Activated CD4-positive, alpha-beta T cell treated with anti-CD3 and anti-CD28 coated beads, Interleukin-2, amount 10 ng/mL, durations not matched to agents 24 days and 14 days (primary cell): ENCODE measurements at regions of chr2 and their contacts with region 1.

Region 1: GRCh38 chr2:69643602-69644505 is at the start of gene AAK1:
- DNase-seq: peak; percentile 95
- H3K4me3 Mint-ChIP-seq: peak within 1 kb of the TSS; percentile 86
- H3K27ac Mint-ChIP-seq: peak within 1 kb of the TSS; percentile 99
- H3K4me1 Mint-ChIP-seq: peaks cover 64% of the 10 kb centered on the region
- H3K27me3 Mint-ChIP-seq: no peaks in the 10 kb centered on the region
- total RNA-seq, gene AAK1: 81.7 and 86.0 TPM in 2 replicates

Region 2: GRCh38 chr2:69386789-69387734 is 256.8 kb before region 1 on chr2 and contains the start of gene GFPT1:
- intact Hi-C with region 1: loop called (anchors 2 kb)
- DNase-seq: peak; percentile 99
- H3K4me3 Mint-ChIP-seq: peak within 1 kb of the TSS; percentile 98
- H3K27ac Mint-ChIP-seq: peak within 1 kb of the TSS; percentile 95
- H3K4me1 Mint-ChIP-seq: peaks cover 40% of the 10 kb centered on the region
- H3K27me3 Mint-ChIP-seq: no peaks in the 10 kb centered on the region
- total RNA-seq, gene GFPT1: 48.8 and 50.6 TPM in 2 replicates

Region 3: DNA sequence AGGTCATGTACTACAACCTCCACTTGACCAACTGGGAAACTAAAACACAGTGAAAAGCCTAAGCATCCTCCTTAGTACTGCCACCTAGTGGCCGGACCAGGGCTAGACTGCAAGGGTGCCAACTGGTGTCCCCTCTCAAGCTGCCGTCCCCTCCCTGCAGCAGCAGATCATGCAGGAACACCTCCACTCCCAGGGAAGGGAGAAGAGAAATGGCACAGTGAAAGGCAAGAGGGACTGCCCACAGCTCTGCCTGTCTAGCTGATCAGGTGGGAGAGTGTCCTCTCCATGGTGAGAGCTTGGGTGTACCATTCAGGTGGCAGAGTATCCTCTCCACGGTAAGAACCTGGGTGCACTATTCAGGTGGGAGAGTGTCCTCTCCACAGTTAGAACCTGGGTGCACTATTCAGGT is 78.4 kb before region 1 on chr2:
- intact Hi-C with region 1: no loop called
- DNase-seq: peak; percentile 92
- H3K4me3 Mint-ChIP-seq: no peak overlapping the region
- H3K27ac Mint-ChIP-seq: no peak overlapping the region
- H3K4me1 Mint-ChIP-seq: peaks cover 58% of the 10 kb centered on the region
- H3K27me3 Mint-ChIP-seq: no peaks in the 10 kb centered on the region

Region 4: DNA sequence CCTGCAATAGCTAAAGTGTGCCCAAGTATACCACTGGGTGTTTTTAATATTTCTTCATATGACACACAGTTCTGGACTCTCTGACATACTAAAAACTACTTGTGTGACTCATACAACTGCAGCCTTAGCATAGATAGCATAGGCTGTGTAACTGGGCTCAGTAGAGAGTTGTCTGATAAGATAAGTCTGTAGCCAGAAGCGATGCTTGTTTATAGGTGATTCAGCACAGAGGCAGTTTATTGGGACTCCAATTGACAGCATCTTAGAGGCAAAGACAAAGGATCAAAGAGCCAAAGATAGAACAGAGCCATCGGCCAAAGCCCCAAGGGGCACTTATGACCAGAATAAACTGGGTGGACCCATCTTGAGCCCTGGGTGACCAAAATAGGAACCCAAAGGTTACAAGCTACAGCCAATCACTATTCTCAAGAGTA is 42.7 kb before region 1 on chr2:
- intact Hi-C with region 1: loop called (anchors 2 kb)
- DNase-seq: no peak
- H3K4me3 Mint-ChIP-seq: no peak overlapping the region
- H3K27ac Mint-ChIP-seq: peak overlapping the region; percentile 23
- H3K4me1 Mint-ChIP-seq: peaks cover 69% of the 10 kb centered on the region
- H3K27me3 Mint-ChIP-seq: no peaks in the 10 kb centered on the region

Region 5: DNA sequence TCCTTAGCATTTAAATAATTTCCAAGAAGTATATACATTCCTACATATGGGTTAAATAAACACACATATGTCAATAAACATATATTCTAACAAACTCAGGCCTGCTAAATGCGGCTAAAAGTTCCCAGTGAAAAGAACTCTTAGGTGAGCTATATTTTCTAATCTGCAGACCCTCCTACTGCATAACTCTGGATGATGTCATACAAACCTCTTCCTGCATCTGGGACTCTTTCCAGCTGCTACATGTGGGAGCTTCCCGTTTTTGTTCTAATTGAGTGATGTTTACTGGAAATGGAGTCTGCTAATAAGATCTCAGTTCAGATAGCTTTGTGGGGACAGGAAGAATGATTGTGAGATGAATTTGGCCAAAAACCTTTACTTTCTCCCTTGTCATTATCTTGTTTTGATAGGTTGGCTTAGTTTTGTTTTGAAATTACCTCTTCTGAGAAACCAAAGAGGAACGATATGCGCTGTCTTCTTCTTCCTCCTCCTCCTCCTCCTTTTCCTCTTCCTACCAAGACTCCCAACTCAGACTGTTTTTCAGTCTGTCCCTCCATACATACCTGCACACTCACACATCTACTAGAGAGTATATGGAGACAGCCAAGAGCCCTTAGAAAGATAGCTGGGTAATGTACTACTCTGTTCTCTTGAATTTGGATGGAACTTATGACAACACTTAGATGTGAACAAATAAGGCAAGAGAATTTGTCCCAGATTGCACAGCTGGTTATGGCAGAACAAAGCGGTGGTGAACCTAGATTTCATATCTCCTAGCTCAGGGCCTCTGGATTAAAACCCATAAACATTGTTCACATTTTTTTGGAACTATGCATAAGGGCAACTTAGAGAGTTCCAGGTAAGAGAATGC is 39.5 kb after region 1 on chr2:
- intact Hi-C with region 1: loop called (anchors 2 kb)
- DNase-seq: no peak
- H3K4me3 Mint-ChIP-seq: peak overlapping the region; percentile 63
- H3K27ac Mint-ChIP-seq: peak overlapping the region; percentile 86
- H3K4me1 Mint-ChIP-seq: peaks cover 55% of the 10 kb centered on the region
- H3K27me3 Mint-ChIP-seq: peaks cover 2% of the 10 kb centered on the region

Region 6: DNA sequence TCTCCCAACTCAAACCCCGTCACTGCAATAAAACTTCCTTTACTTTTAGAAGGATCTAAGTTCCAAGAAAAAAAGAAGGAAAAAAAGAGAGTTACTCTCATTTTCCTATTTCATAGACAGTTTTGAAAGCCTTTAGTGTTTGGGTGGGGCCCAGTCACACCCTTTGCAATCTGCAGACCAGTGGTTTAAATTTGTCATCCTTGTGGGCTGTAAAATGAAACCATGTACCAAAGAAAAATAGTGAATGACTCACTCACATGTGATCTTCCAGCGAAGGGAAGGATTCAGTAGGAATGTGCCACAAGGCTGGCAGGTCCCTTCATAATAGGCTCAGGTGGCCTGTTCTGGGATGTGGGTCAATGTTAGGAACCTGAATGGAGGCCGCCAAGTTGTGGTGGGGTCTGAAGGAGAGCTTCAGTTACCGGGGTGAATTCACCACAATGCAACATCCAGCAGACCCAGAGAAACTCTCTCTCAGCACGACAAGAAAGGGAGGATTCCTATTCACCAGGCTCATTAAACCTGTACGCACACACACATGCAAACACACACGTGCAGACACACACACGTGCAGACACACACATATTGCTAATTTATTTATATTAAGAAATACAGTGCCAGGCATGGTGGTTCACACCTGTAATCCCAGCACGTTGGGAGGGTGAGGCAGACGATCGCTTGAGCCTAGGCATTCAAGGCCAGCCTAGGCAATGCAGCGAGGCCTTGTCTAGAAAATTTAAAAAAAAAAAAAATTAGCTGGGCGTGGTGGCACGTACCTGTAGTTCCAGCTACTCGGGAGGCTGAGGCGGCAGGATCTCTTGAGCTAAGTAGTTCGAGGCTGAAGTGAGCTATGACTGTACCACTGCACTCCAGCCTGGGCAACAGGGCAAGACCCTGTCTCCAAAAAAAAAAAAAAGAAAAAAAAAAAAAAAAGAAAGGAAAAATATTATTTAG is 126.6 kb after region 1 on chr2:
- intact Hi-C with region 1: loop called (anchors 2 kb)
- DNase-seq: peak; percentile 80
- H3K4me3 Mint-ChIP-seq: peak overlapping the region; percentile 29
- H3K27ac Mint-ChIP-seq: peak overlapping the region; percentile 77
- H3K4me1 Mint-ChIP-seq: peaks cover 66% of the 10 kb centered on the region
- H3K27me3 Mint-ChIP-seq: no peaks in the 10 kb centered on the region

Region 7: GRCh38 chr2:70086838-70087701 is 443.2 kb after region 1 on chr2 and contains the start of gene PCBP1:
- intact Hi-C with region 1: loop called (anchors 10 kb)
- DNase-seq: peak; percentile 98
- H3K4me3 Mint-ChIP-seq: peak within 1 kb of the TSS; percentile 96
- H3K27ac Mint-ChIP-seq: peak within 1 kb of the TSS; percentile 100
- H3K4me1 Mint-ChIP-seq: peaks cover 56% of the 10 kb centered on the region
- H3K27me3 Mint-ChIP-seq: no peaks in the 10 kb centered on the region
- total RNA-seq, gene PCBP1: 443 and 447 TPM in 2 replicates